ENCODE measurements at regions of chr3 and their contacts with region 1.

Region 1: DNA sequence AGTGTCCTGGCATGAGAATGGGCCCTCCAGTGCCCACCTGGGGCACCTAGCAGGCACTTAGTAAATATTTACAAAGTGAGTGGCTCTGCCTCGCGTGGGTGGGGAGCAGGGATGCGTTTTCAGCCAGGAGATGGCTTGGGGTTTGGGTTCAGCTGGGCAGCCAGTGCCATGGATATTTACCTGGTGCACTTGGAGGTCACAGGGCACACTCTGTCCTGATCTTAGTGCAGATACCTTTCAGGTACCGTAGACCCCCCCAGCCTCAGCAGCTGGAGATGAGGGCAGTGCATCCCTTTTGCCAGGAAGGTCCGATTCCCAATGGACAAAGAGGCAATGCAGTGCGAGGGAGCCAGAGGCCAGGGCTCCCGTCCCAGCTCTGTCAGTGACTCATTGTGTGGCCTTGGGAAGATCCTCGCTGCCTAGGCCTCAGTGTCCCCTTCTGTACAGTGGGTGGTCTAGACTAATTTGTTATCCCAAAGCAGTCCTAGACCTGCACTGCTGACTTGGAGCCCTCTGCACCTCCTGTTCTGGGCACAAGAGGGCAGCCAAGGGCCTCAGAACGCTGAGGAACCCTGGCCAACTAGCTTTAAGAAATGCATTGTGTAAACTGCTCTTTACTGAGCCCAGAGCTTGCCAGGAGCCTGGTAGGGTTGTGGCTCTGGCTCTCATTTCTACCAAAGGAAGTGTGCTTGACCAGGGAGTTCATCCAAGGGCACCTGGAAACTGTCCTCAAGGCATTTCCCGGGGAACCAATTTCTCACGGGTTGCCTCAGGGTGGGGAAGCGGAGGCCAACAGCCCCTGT is 16.0 kb downstream of the HDAC11 start:
- DNase-seq: peak; percentile 80
- H3K4me3 Mint-ChIP-seq: no peak overlapping the region
- H3K27ac Mint-ChIP-seq: no peak overlapping the region
- H3K4me1 Mint-ChIP-seq: peaks cover 19% of the 10 kb centered on the region
- H3K27me3 Mint-ChIP-seq: no peaks in the 10 kb centered on the region

Region 2: GRCh38 chr3:13204177-13204581 is 291.9 kb before region 1 on chr3:
- CTCF ChIA-PET with region 1: no interaction called
- POLR2A ChIA-PET with region 1: no interaction called
- DNase-seq: no peak
- H3K4me3 Mint-ChIP-seq: no peak overlapping the region
- H3K27ac Mint-ChIP-seq: no peak overlapping the region
- H3K4me1 Mint-ChIP-seq: no peaks in the 10 kb centered on the region
- H3K27me3 Mint-ChIP-seq: peaks cover 73% of the 10 kb centered on the region

Region 3: GRCh38 chr3:13484851-13485590 is 11.1 kb before region 1 on chr3:
- CTCF ChIA-PET with region 1: interaction called, 23 read pairs
- POLR2A ChIA-PET with region 1: interaction called, 5 read pairs
- DNase-seq: no peak
- H3K4me3 Mint-ChIP-seq: no peak overlapping the region
- H3K27ac Mint-ChIP-seq: no peak overlapping the region
- H3K4me1 Mint-ChIP-seq: peaks cover 12% of the 10 kb centered on the region
- H3K27me3 Mint-ChIP-seq: peaks cover 5% of the 10 kb centered on the region

Region 4: GRCh38 chr3:13648060-13649001 is 152.2 kb after region 1 on chr3:
- CTCF ChIA-PET with region 1: interaction called, 417 read pairs
- POLR2A ChIA-PET with region 1: interaction called, 15 read pairs
- DNase-seq: peak; percentile 78
- H3K4me3 Mint-ChIP-seq: peak overlapping the region; percentile 33
- H3K27ac Mint-ChIP-seq: peak overlapping the region; percentile 66
- H3K4me1 Mint-ChIP-seq: peaks cover 52% of the 10 kb centered on the region
- H3K27me3 Mint-ChIP-seq: peaks cover 29% of the 10 kb centered on the region

Measured in activated CD4-positive, alpha-beta memory T cell treated with anti-CD3 and anti-CD28 coated beads, Interleukin-2, amount 10 ng/mL, durations not matched to agents 7 days and 5 days (primary cell).